ENCODE measurements at regions of chr12 and their contacts with region 1.

Region 1: GRCh38 chr12:109934026-109934425 is 34.0 kb downstream of the TCHP start:
- DNase-seq: peak in 2 of 5 donors; percentile 41 to 53
- H3K4me3 ChIP-seq: no peak overlapping the region
- H3K27ac ChIP-seq: peak overlapping the region in 1 of 2 donors; percentile 72
- H3K4me1 ChIP-seq: peaks cover 15% of the 10 kb centered on the region
- H3K27me3 ChIP-seq: no peaks in the 10 kb centered on the region
- CTCF ChIP-seq: peak in 2 of 3 donors; percentile 10 to 23
- EP300 ChIP-seq: no peak
- POLR2A ChIP-seq: no peak

Region 2: GRCh38 chr12:108360487-108360886 is 1573.5 kb before region 1 on chr12:
- intact Hi-C with region 1: no loop called
- DNase-seq: no peak
- H3K4me3 ChIP-seq: no peak overlapping the region
- H3K27ac ChIP-seq: no peak overlapping the region
- H3K4me1 ChIP-seq: no peaks in the 10 kb centered on the region
- H3K27me3 ChIP-seq: no peaks in the 10 kb centered on the region
- CTCF ChIP-seq: no peak
- EP300 ChIP-seq: no peak
- POLR2A ChIP-seq: no peak

Region 3: DNA sequence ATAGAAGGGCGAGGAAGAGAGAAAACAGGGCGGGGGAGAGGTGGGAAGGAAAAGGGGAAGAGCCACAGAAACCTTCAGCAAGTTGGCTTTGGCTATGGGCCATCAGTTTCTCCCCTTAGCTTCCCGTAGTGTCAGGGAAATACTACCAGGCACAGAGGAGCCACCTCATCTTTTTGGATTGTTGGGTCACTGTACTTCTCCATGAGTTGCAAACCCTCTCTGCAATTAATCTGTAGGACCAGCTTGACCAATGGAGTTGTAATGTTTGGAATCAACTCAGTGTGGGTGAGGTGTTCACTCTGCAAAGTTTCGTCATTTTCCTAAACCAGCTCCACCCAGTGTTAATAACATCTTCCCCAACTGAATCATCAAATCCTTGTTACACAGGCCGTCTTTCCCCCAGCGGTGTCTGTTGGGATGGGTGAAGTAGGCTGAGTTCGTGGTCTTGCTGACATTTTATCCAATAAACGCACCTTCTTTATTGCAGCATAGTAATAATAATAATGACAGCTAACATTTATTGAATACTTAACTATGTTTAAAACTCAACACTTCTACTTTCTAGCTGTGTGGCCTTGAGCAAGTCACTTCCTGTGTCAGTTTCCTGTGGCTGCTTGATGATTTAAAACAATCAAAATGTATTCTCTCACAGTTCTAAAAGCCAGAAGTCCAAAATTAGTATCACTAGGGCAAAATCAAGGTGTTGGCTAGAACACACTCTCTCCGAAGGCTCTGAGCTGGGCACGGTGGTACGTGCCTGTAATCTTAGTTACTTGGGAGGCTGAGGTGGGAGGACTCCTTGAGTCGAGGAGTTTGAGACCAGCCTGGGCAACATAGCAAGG is 45.6 kb before region 1 on chr12:
- intact Hi-C with region 1: no loop called
- DNase-seq: no peak
- H3K4me3 ChIP-seq: no peak overlapping the region
- H3K27ac ChIP-seq: no peak overlapping the region
- H3K4me1 ChIP-seq: no peaks in the 10 kb centered on the region
- H3K27me3 ChIP-seq: no peaks in the 10 kb centered on the region
- CTCF ChIP-seq: no peak
- EP300 ChIP-seq: no peak
- POLR2A ChIP-seq: no peak

Region 4: GRCh38 chr12:109995686-109996482 is 61.9 kb after region 1 on chr12 and contains the start of gene GIT2:
- intact Hi-C with region 1: loop called in 2 of 4 experiments (anchors 5 to 10 kb)
- DNase-seq: peak; percentile 91 to 93 (median 92)
- H3K4me3 ChIP-seq: peak within 1 kb of the TSS; percentile 98
- H3K27ac ChIP-seq: peak within 1 kb of the TSS; percentile 38 to 60
- H3K4me1 ChIP-seq: peaks cover 5% of the 10 kb centered on the region
- H3K27me3 ChIP-seq: no peaks in the 10 kb centered on the region
- CTCF ChIP-seq: no peak
- EP300 ChIP-seq: no peak
- POLR2A ChIP-seq: peak; percentile 46
- total RNA-seq, gene GIT2: 26.4 to 58.8 (median 43.7) TPM

Region 5: GRCh38 chr12:110124184-110124995 is 190.4 kb after region 1 on chr12 and contains the start of gene IFT81:
- intact Hi-C with region 1: no loop called
- DNase-seq: peak; percentile 96 to 98 (median 98)
- H3K4me3 ChIP-seq: peak within 1 kb of the TSS; percentile 68
- H3K27ac ChIP-seq: peak within 1 kb of the TSS; percentile 30 to 48
- H3K4me1 ChIP-seq: no peaks in the 10 kb centered on the region
- H3K27me3 ChIP-seq: no peaks in the 10 kb centered on the region
- CTCF ChIP-seq: peak in 1 of 3 donors; percentile 11
- EP300 ChIP-seq: no peak
- POLR2A ChIP-seq: peak; percentile 70
- total RNA-seq, gene IFT81: 15.5 to 22.3 (median 18.4) TPM

Region 6: DNA sequence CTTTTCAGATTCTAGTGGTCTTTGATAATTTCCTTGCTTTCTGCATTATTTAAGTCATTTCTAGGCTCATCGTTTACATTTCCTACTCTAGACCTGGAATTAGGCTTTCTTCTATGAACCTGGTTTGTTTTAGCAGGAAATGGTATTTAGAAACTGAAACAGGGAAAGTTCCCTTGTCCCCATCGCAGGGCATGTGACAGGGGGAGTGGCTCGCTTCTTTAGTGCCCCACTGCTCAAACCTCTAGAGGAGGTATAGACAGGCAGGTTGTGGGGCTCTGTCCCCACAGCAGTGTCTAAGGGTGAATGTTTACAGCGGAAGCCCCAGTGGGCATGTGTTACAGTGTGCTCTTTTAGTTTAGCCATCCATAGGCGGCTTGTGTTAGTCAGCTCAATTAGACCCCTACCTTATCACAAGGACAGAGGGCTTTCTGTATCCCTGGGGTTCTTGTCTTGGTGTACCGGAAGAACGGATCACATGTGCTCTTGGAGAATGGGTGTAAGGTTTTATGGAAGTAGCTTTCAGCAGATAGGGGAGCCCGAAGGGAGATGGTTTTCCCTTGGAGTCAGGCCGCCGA is 215.1 kb after region 1 on chr12:
- intact Hi-C with region 1: no loop called
- DNase-seq: no peak
- H3K4me3 ChIP-seq: no peak overlapping the region
- H3K27ac ChIP-seq: no peak overlapping the region
- H3K4me1 ChIP-seq: no peaks in the 10 kb centered on the region
- H3K27me3 ChIP-seq: no peaks in the 10 kb centered on the region
- CTCF ChIP-seq: no peak
- EP300 ChIP-seq: no peak
- POLR2A ChIP-seq: no peak

Measured in ovary (tissue), 10 donors.